CD4-positive, alpha-beta T cell (primary cell): ENCODE measurements at regions of chr3 and their contacts with region 1.

Region 1: DNA sequence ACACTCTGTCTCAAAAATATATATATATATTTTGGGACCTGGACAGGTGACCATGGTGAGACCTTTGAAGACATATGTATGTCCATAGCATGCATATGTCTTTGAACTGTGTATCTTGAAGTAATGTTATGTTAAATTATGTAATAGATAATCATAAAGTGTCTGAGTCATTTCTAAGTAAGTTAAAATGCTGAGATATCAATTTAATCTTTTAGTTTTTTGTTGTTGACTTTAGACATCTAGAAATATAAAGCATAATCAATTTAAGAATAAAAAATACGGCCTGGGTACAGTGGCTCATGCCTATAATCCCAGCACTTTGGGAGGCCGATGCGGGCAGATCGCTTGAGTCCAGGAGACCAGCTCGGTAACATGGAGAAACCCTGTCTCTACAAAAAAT is 12.7 kb upstream of the SETD2 start:
- DNase-seq: no peak
- ATAC-seq: no peak
- H3K4me3 ChIP-seq: no peak overlapping the region
- H3K4me3 Mint-ChIP-seq: no peak overlapping the region
- H3K27ac ChIP-seq: no peak overlapping the region
- H3K27ac Mint-ChIP-seq: no peak overlapping the region
- H3K4me1 ChIP-seq: no peaks in the 10 kb centered on the region
- H3K4me1 Mint-ChIP-seq: no peaks in the 10 kb centered on the region
- H3K27me3 ChIP-seq: no peaks in the 10 kb centered on the region
- H3K27me3 Mint-ChIP-seq: no peaks in the 10 kb centered on the region
- CTCF ChIP-seq: no peak

Region 2: GRCh38 chr3:47113669-47114365 is 62.8 kb before region 1 on chr3:
- CTCF ChIA-PET with region 1: no interaction called
- POLR2A ChIA-PET with region 1: no interaction called
- intact Hi-C with region 1: loop called in 1 of 2 experiments (anchors 5 kb)
- DNase-seq: no peak
- ATAC-seq: no peak
- H3K4me3 ChIP-seq: no peak overlapping the region
- H3K4me3 Mint-ChIP-seq: no peak overlapping the region
- H3K27ac ChIP-seq: no peak overlapping the region
- H3K27ac Mint-ChIP-seq: no peak overlapping the region
- H3K4me1 ChIP-seq: no peaks in the 10 kb centered on the region
- H3K4me1 Mint-ChIP-seq: peaks cover 19% of the 10 kb centered on the region
- H3K27me3 ChIP-seq: no peaks in the 10 kb centered on the region
- H3K27me3 Mint-ChIP-seq: no peaks in the 10 kb centered on the region
- CTCF ChIP-seq: no peak

Region 3: DNA sequence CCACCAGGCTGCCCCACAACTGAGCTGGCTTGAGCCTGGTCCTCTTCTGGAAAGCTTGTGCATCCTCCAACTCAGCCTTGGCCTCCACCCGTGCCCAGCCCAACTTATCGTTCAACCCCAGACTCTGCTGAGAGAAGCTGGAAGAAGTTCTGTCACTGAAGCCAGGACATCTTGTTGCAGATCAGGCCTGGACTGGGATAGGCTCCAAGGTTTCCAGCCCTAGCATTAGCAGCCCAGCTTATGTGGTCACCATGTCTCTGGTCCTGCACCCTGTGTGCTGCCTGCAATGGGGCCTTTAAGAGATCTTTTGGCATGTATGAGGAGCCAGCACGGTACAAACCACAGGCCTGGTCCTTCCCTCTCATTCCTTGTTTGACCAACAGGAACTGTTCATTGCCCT is 1031.5 kb after region 1 on chr3:
- CTCF ChIA-PET with region 1: no interaction called
- POLR2A ChIA-PET with region 1: no interaction called
- intact Hi-C with region 1: no loop called
- DNase-seq: no peak
- ATAC-seq: no peak
- H3K4me3 ChIP-seq: no peak overlapping the region
- H3K4me3 Mint-ChIP-seq: no peak overlapping the region
- H3K27ac ChIP-seq: no peak overlapping the region
- H3K27ac Mint-ChIP-seq: no peak overlapping the region
- H3K4me1 ChIP-seq: no peaks in the 10 kb centered on the region
- H3K4me1 Mint-ChIP-seq: no peaks in the 10 kb centered on the region
- H3K27me3 ChIP-seq: no peaks in the 10 kb centered on the region
- H3K27me3 Mint-ChIP-seq: no peaks in the 10 kb centered on the region
- CTCF ChIP-seq: no peak